ENCODE measurements at regions of chr10 and their contacts with region 1.

Region 1: GRCh38 chr10:35195361-35196306 is 69.0 kb downstream of the CREM start:
- DNase-seq: peak; percentile 86
- H3K4me3 Mint-ChIP-seq: peak overlapping the region; percentile 84
- H3K27ac Mint-ChIP-seq: peak overlapping the region; percentile 100
- H3K4me1 Mint-ChIP-seq: peaks cover 60% of the 10 kb centered on the region
- H3K27me3 Mint-ChIP-seq: no peaks in the 10 kb centered on the region

Region 2: DNA sequence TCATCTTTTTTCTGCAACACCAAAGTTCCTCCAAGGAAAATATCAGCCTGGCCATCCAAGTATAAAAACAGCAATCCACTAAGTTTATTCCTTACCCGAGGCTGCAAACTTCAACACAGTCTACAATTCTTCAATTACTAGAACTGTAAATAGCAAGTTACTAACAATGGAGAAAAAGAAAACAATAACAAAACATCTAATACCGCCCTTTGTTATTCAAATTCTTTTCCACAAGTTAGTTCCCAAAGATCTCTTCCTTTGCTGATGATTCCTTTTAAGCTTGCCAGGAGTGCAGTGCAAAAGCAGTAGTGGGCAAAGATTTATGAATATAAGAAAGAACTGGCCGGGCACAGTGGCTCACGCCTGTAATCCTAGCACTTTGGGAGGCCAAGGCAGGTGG is 191.7 kb before region 1 on chr10:
- CTCF ChIA-PET with region 1: no interaction called
- POLR2A ChIA-PET with region 1: no interaction called
- DNase-seq: no peak
- H3K4me3 Mint-ChIP-seq: no peak overlapping the region
- H3K27ac Mint-ChIP-seq: no peak overlapping the region
- H3K4me1 Mint-ChIP-seq: no peaks in the 10 kb centered on the region
- H3K27me3 Mint-ChIP-seq: no peaks in the 10 kb centered on the region

Region 3: GRCh38 chr10:35119378-35119777 is 76.3 kb before region 1 on chr10:
- CTCF ChIA-PET with region 1: interaction called, 50 read pairs
- POLR2A ChIA-PET with region 1: interaction called, 730 read pairs
- DNase-seq: no peak
- H3K4me3 Mint-ChIP-seq: no peak overlapping the region
- H3K27ac Mint-ChIP-seq: no peak overlapping the region
- H3K4me1 Mint-ChIP-seq: peaks cover 14% of the 10 kb centered on the region
- H3K27me3 Mint-ChIP-seq: peaks cover 3% of the 10 kb centered on the region

Region 4: GRCh38 chr10:35150308-35150707 is 45.3 kb before region 1 on chr10:
- CTCF ChIA-PET with region 1: interaction called, 11 read pairs
- POLR2A ChIA-PET with region 1: interaction called, 51 read pairs
- DNase-seq: no peak
- H3K4me3 Mint-ChIP-seq: peak overlapping the region; percentile 33
- H3K27ac Mint-ChIP-seq: peak overlapping the region; percentile 73
- H3K4me1 Mint-ChIP-seq: peaks cover 57% of the 10 kb centered on the region
- H3K27me3 Mint-ChIP-seq: no peaks in the 10 kb centered on the region

Region 5: DNA sequence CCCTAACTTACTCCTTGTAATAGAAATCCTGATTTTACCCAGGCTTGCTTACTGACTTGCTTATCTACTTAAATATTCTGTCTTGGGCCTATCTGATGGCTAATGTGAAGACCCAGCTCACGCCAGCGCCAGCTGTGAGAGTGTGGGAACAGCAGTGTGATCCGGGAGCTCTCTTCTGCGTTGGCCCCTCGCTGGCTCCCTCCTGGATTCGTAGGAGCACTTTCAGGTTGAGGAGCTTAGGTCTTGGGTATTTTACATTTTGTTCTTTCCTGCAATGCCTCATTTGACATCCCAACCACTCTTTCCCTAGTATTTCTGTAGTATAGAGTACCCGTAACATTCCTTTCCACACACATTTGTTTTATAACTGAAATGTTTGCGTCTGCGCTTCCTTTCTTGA is 17.3 kb before region 1 on chr10:
- CTCF ChIA-PET with region 1: interaction called, 13 read pairs
- POLR2A ChIA-PET with region 1: interaction called, 19 read pairs
- DNase-seq: no peak
- H3K4me3 Mint-ChIP-seq: no peak overlapping the region
- H3K27ac Mint-ChIP-seq: no peak overlapping the region
- H3K4me1 Mint-ChIP-seq: no peaks in the 10 kb centered on the region
- H3K27me3 Mint-ChIP-seq: no peaks in the 10 kb centered on the region

Region 6: GRCh38 chr10:35208536-35208935 is 12.9 kb after region 1 on chr10:
- CTCF ChIA-PET with region 1: interaction called, 112 read pairs
- POLR2A ChIA-PET with region 1: interaction called, 153 read pairs
- DNase-seq: peak; percentile 79
- H3K4me3 Mint-ChIP-seq: peak overlapping the region; percentile 57
- H3K27ac Mint-ChIP-seq: peak overlapping the region; percentile 90
- H3K4me1 Mint-ChIP-seq: peaks cover 65% of the 10 kb centered on the region
- H3K27me3 Mint-ChIP-seq: no peaks in the 10 kb centered on the region

Region 7: DNA sequence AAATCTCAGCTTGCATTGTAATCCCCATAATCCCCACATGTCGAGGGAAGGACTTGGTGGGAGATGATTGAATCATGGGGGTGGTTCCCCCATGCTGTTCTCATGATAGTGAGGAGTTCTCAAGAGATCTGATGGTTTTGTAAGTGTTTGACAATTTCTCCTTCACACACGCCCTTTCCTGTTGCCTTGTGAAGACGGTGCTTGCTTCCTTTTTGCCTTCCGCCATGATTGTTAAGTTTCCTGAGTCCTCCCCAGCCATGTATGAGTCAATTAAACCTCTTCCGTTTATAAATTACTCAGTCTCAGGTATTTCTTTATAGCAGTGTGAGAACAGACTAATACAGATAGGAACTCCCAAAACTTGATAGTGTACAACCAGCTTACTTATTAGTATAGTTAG is 29.6 kb after region 1 on chr10:
- CTCF ChIA-PET with region 1: interaction called, 87 read pairs
- POLR2A ChIA-PET with region 1: interaction called, 120 read pairs
- DNase-seq: no peak
- H3K4me3 Mint-ChIP-seq: no peak overlapping the region
- H3K27ac Mint-ChIP-seq: peak overlapping the region; percentile 48
- H3K4me1 Mint-ChIP-seq: peaks cover 14% of the 10 kb centered on the region
- H3K27me3 Mint-ChIP-seq: no peaks in the 10 kb centered on the region

Measured in activated CD4-positive, alpha-beta memory T cell treated with anti-CD3 and anti-CD28 coated beads, Interleukin-2, amount 10 ng/mL, durations not matched to agents 7 days and 5 days (primary cell).